Left ventricle myocardium inferior (tissue), 1 donor: ENCODE measurements at regions of chr2 and their contacts with region 1.

Region 1: GRCh38 chr2:68909793-68910674 is 38.8 kb upstream of the BMP10 start:
- DNase-seq: peak; percentile 44
- H3K4me3 ChIP-seq: no peak overlapping the region
- H3K27ac ChIP-seq: no peak overlapping the region
- H3K4me1 ChIP-seq: peaks cover 12% of the 10 kb centered on the region
- H3K27me3 ChIP-seq: peaks cover 20% of the 10 kb centered on the region
- CTCF ChIP-seq: peak; percentile 95

Region 2: GRCh38 chr2:68487773-68488355 is 422.2 kb before region 1 on chr2:
- intact Hi-C with region 1: loop called (anchors 10 kb)
- DNase-seq: no peak
- H3K4me3 ChIP-seq: no peak overlapping the region
- H3K27ac ChIP-seq: no peak overlapping the region
- H3K4me1 ChIP-seq: no peaks in the 10 kb centered on the region
- H3K27me3 ChIP-seq: no peaks in the 10 kb centered on the region
- CTCF ChIP-seq: peak; percentile 68

Region 3: GRCh38 chr2:68709421-68709911 is 200.6 kb before region 1 on chr2:
- intact Hi-C with region 1: loop called (anchors 5 kb)
- DNase-seq: no peak
- H3K4me3 ChIP-seq: no peak overlapping the region
- H3K27ac ChIP-seq: no peak overlapping the region
- H3K4me1 ChIP-seq: no peaks in the 10 kb centered on the region
- H3K27me3 ChIP-seq: peaks cover under 1% of the 10 kb centered on the region
- CTCF ChIP-seq: peak; percentile 78

Region 4: DNA sequence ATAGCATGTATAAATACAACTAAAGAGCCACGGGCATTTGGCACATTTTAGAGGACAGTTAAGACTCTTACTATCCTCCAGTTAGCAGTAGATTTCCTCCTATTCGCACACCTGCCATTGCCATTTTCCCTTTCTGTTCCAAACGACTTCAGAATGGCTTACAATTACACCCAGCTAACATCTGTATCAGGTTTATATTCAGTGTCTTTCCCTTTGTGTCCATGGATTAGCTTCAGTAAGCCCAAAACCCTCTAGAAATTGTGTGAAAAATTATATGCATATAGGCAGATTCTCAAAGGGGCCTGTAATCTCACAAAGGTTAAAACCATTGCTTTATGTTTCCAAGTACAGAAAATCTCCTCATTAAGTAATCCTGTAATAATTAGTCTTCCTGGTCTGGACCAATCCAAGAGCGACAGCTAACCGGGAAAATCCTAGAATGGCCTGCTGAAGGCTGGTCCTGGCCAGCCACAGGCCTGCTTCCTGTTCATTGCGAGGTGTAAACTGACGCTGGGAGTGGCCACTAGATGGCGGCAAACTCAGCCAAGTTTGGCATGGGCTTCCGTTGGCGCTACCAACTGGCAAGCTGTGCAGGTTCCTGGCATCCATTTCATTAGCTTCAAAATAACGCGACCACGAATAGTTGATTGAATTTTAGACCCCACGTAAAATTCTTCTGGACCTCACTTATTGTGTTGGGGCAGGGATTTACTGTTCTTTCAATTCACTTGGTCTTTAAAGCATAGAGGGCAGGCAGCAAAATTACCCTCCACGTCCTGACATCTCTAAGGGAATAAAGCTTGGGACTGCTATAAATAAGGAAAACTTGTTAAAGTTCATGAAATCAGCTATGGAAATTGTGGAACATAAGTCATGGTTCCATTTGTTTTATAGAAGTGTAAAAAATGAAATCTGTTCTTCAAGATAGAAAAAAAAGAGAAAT is 158.4 kb before region 1 on chr2:
- intact Hi-C with region 1: loop called (anchors 5 kb)
- DNase-seq: peak; percentile 88
- H3K4me3 ChIP-seq: peak overlapping the region; percentile 33
- H3K27ac ChIP-seq: peak overlapping the region; percentile 2
- H3K4me1 ChIP-seq: peaks cover 20% of the 10 kb centered on the region
- H3K27me3 ChIP-seq: no peaks in the 10 kb centered on the region
- CTCF ChIP-seq: peak; percentile 96

Region 5: DNA sequence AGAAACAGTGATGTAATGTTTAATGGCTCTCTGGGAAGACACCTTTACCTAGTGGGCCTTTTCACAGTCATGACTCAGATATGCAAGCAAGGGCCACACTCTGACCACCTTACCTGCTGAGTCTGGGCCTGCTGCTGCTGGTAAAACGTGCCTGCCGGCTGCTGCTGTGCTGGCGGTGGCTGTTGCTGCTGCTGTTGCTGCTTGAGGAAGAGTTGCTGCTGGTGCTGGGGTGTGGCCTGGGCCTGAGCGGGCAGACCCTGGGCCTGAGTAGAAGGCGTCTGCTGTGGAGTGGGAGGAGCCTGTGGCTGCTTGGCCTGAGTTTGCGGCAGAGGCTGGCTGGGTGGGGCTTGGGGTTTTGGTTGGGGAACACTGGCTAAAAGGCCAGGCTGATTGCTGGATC is 608.8 kb after region 1 on chr2:
- intact Hi-C with region 1: no loop called
- DNase-seq: no peak
- H3K4me3 ChIP-seq: no peak overlapping the region
- H3K27ac ChIP-seq: no peak overlapping the region
- H3K4me1 ChIP-seq: peaks cover 18% of the 10 kb centered on the region
- H3K27me3 ChIP-seq: no peaks in the 10 kb centered on the region
- CTCF ChIP-seq: no peak